ENCODE measurements at regions of chr3 and their contacts with region 1.

Region 1: GRCh38 chr3:172039436-172040077 is at the start of gene FNDC3B:
- DNase-seq: peak; percentile 95
- H3K4me3 ChIP-seq: peak within 1 kb of the TSS; percentile 67 to 98 (median 81)
- H3K27ac ChIP-seq: peak within 1 kb of the TSS; percentile 97
- H3K4me1 ChIP-seq: peaks cover 15% of the 10 kb centered on the region
- H3K27me3 ChIP-seq: no peaks in the 10 kb centered on the region
- CTCF ChIP-seq: no peak
- total RNA-seq, gene FNDC3B: 161 to 200 TPM

Region 2: GRCh38 chr3:171838218-171838761 is 201.3 kb before region 1 on chr3:
- CTCF ChIA-PET with region 1: no interaction called
- dilution Hi-C with region 1: no loop called
- in situ Hi-C with region 1: no loop called
- intact Hi-C with region 1: loop called (anchors 5 kb)
- DNase-seq: peak; percentile 23
- H3K4me3 ChIP-seq: no peak overlapping the region
- H3K27ac ChIP-seq: no peak overlapping the region
- H3K4me1 ChIP-seq: peaks cover 5% of the 10 kb centered on the region
- H3K27me3 ChIP-seq: no peaks in the 10 kb centered on the region
- CTCF ChIP-seq: no peak

Region 3: DNA sequence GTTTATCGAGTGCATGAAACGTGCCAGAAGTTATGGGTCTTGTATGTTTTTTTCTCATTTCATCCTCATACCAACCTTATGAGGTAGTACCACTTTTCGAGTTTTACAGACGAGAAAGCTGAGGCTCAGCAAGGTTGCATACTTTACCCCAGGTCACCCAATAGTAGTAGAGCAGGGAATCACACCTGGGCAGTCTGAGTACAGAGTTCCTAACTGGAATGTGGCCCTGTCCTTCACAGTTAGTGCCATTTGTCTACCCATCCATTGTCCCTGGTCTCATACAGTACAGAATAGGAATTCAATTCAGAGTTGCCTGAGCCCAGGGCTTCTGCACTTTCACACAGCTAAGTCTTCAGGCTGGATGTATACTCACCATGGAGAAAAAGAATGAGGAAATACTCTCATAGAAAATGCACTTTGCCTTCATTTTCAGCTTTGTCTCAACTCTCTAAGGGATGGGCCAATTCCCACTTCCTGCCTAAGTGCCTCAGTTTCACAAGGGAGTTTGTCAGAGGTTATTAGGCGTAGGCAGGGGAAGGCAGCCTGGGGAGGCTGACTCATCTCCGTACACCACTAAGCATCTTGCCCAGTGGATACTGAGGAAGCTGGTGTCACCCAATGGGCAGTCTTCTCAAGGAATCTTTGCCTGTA is 103.2 kb before region 1 on chr3:
- CTCF ChIA-PET with region 1: no interaction called
- dilution Hi-C with region 1: no loop called
- in situ Hi-C with region 1: no loop called
- intact Hi-C with region 1: loop called (anchors 2 kb)
- DNase-seq: peak; percentile 83
- H3K4me3 ChIP-seq: no peak overlapping the region
- H3K27ac ChIP-seq: no peak overlapping the region
- H3K4me1 ChIP-seq: peaks cover 13% of the 10 kb centered on the region
- H3K27me3 ChIP-seq: no peaks in the 10 kb centered on the region
- CTCF ChIP-seq: no peak

Region 4: DNA sequence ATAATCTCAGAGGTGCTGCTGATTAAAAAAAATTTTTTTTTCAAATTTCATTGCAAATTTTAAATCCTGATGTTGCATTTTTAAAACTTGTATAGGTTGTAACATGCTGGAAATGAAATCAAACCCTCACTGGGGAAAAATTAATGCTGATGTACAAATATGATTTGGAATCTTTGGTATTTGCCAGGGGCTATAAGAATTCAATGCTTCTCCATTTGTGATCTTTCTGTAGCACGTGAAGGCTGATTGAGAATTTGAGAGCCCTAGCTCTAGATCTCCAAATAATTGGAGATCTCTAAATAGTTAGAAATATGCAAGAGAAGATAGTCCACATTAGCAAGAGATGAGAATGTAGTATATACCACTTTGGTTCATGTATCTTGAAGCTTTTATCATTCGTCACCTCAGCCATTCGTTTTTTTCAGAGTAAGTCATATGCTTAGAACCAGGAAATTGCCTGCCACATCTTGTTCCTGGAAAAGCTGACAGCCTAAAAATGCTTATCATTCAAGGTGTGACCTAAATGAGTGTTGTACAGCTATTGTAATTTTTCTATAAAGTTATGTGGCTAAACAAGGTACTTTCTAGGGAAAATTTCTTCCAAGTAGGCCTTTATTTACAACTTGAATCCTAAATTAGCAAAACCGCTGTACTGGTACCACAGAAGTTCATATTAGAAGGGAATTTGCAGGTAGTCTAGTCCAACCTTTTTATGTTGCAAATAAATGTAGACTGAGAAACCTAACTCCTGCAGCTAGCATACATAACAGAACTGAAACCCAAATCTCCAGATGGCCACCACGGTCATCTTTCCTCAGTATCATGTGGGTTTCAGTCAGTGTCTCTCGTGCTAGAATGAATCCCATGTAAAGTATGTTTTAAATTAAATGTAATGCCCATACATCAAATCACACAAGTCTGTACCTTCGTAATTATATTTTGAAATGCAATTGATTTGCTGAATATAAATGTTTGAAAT is 48.3 kb after region 1 on chr3:
- CTCF ChIA-PET with region 1: no interaction called
- dilution Hi-C with region 1: no loop called
- in situ Hi-C with region 1: no loop called
- intact Hi-C with region 1: loop called (anchors 5 kb)
- DNase-seq: peak; percentile 57
- H3K4me3 ChIP-seq: peak overlapping the region in 1 of 3 experiments; percentile 29
- H3K27ac ChIP-seq: peak overlapping the region; percentile 85
- H3K4me1 ChIP-seq: peaks cover 41% of the 10 kb centered on the region
- H3K27me3 ChIP-seq: no peaks in the 10 kb centered on the region
- CTCF ChIP-seq: no peak

Region 5: DNA sequence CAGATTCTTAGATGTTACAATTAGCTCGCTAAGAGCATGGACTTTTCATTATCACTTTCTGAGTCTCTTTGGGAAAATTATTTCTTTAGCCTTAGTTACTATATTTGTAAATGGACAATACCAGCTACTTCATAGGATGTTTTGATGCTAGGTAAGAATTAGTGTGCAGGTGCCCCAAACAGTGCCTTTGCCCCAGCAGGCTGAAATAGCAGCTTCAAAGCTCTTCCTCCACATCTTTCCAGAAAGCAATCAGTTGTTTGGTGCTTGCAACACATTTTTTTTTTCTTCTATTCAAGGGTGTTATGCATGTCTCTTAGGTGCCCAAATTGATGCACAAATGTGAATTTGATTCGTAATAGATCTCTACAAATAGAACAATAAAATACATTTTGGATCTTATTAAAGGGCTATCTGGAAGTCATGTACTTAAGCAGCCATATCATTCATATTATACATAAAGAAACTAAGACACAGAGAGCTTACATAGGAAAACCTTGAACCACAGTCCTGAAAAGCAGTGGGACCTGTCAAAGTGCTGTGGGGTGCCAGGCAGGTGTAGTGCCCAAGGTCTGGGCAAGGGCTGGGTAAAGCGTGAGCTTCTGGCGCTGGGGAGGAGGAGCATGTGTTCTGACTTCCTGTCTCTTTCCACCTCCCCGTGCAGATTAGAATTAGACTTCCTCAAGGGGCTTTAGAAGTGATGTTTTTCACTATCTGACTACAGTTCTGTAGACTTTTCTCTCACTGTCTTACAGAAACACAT is 62.7 kb after region 1 on chr3:
- CTCF ChIA-PET with region 1: no interaction called
- dilution Hi-C with region 1: no loop called
- in situ Hi-C with region 1: no loop called
- intact Hi-C with region 1: loop called (anchors 1 kb)
- DNase-seq: no peak
- H3K4me3 ChIP-seq: no peak overlapping the region
- H3K27ac ChIP-seq: peak overlapping the region; percentile 95
- H3K4me1 ChIP-seq: peaks cover 61% of the 10 kb centered on the region
- H3K27me3 ChIP-seq: no peaks in the 10 kb centered on the region
- CTCF ChIP-seq: no peak

Region 6: GRCh38 chr3:172155897-172156657 is 116.5 kb after region 1 on chr3:
- CTCF ChIA-PET with region 1: no interaction called
- dilution Hi-C with region 1: no loop called
- in situ Hi-C with region 1: no loop called
- intact Hi-C with region 1: loop called (anchors 1 kb)
- DNase-seq: peak; percentile 95
- H3K4me3 ChIP-seq: no peak overlapping the region
- H3K27ac ChIP-seq: peak overlapping the region; percentile 87
- H3K4me1 ChIP-seq: peaks cover 72% of the 10 kb centered on the region
- H3K27me3 ChIP-seq: no peaks in the 10 kb centered on the region
- CTCF ChIP-seq: no peak

Region 7: DNA sequence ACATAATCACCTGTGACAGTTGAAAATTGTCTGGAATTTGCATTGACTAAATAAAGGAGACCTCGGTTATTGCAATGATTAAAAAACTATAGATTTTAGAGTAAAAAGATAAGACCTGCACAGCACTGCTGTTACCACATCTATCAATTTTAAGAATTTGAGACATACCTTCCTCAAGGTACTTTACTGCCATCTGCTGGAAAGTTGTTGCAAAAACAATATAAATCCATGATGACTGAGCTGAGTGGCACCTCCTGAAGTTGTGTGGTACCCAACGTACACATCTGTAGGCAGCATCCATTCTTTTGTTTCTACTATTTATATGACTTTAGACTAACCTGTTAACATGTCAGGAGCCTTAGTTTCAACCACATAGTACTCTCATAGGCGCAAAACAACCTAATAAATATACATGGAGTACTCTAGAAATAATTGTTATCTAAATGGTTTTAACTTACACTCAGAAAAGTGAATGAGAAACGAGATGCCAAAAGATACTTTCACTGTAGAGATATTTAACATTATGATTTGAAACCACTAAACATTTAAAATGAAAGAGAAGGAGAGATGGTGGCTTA is 302.0 kb after region 1 on chr3:
- CTCF ChIA-PET with region 1: no interaction called
- dilution Hi-C with region 1: no loop called
- in situ Hi-C with region 1: no loop called
- intact Hi-C with region 1: loop called (anchors 2 kb)
- DNase-seq: peak; percentile 50
- H3K4me3 ChIP-seq: no peak overlapping the region
- H3K27ac ChIP-seq: no peak overlapping the region
- H3K4me1 ChIP-seq: no peaks in the 10 kb centered on the region
- H3K27me3 ChIP-seq: no peaks in the 10 kb centered on the region
- CTCF ChIP-seq: peak; percentile 52 to 59

Measured in mammary epithelial cell (primary cell).